Brain microvascular endothelial cell (primary cell): ENCODE measurements at regions of chr10 and their contacts with region 1.

Region 1: DNA sequence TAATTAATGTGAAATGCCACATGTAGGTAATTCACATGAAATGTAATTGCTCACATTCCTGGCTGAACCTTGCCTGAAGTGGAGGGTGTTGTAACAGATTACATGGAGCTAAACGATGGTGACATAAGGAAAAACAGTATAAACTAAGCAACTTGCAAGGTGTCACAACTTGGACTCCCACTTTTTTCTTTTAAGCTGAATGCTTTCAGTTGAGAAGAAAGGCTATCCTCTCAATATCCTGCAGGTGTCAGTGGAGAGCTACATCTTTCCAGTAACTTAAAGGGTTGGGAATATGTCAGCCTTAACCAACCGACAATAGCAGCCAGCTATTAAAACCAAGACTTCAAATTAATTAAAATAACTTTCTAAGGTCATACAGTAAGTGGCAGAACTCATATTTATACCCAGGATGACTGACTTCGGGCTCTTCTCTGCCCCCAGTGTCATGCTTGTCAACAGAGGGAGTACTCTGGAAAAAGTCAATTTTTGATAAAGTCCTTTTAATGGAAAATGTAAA is 33.7 kb downstream of the NRBF2 start:
- DNase-seq: peak; percentile 58
- H3K4me3 ChIP-seq: no peak overlapping the region
- H3K27ac ChIP-seq: no peak overlapping the region
- H3K27me3 ChIP-seq: no peaks in the 10 kb centered on the region
- CTCF ChIP-seq: peak; percentile 74

Region 2: GRCh38 chr10:63629363-63630084 is 462.7 kb after region 1 on chr10:
- in situ Hi-C with region 1: loop called (anchors 10 kb)
- DNase-seq: peak; percentile 99
- H3K4me3 ChIP-seq: peak overlapping the region; percentile 63
- H3K27ac ChIP-seq: peak overlapping the region; percentile 99
- H3K27me3 ChIP-seq: no peaks in the 10 kb centered on the region
- CTCF ChIP-seq: peak; percentile 96